Naive thymus-derived CD4-positive, alpha-beta T cell (primary cell): ENCODE measurements at regions of chr20 and their contacts with region 1.

Region 1: DNA sequence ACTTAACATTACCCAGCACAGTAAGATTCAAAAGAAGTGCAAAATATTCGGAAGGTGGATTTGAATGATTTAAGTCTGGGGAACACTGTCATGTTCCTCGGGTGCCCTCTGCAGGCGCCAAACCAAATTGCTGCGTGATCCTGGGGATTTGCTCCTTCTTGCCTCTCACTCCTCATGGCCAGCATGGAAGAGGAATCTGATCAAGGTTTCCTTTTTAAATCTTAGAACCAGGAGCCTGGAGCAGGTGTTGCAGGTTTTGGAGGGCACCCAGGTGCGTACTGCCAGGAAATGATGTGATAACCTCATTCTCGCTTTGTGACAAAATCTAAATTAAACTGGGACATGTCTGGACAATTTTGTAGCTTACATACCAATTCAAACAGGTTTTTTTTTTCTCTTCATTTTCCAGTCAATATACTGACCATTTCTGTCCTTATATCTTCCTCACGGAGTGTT is 8.1 kb upstream of the PFDN4 start:
- DNase-seq: peak; percentile 32 to 69 (median 53)
- ATAC-seq: peak; percentile 78
- H3K4me3 ChIP-seq: no peak overlapping the region
- H3K4me3 Mint-ChIP-seq: no peak overlapping the region
- H3K27ac ChIP-seq: no peak overlapping the region
- H3K27ac Mint-ChIP-seq: no peak overlapping the region
- H3K4me1 ChIP-seq: no peaks in the 10 kb centered on the region
- H3K4me1 Mint-ChIP-seq: peaks cover 0 to 4% (median 0%) of the 10 kb centered on the region in 7 donors
- H3K27me3 ChIP-seq: no peaks in the 10 kb centered on the region
- H3K27me3 Mint-ChIP-seq: peaks cover 0 to 4% (median 0%) of the 10 kb centered on the region in 5 donors

Region 2: DNA sequence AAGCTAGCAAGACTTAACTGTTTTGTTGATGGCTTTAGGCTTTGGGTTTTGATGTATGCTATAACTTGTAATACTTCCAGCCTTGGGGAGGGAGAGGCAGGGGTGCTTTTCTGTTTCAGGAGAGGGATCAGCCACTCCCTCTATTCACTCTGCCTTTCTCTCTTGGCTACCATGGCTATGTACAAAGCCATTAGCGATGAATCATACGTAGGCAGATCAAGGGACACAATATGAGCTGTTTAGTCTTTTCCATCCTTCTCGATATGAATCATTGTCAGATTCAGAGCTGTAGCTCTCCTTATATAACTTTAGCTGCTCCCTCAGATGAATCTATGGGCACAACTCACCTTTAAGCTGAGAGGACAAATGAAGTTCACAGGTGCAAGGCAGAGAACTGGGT is 997.0 kb before region 1 on chr20:
- CTCF ChIA-PET with region 1: no interaction called
- POLR2A ChIA-PET with region 1: no interaction called
- intact Hi-C with region 1: no loop called
- DNase-seq: no peak
- ATAC-seq: no peak
- H3K4me3 ChIP-seq: no peak overlapping the region
- H3K4me3 Mint-ChIP-seq: no peak overlapping the region
- H3K27ac ChIP-seq: no peak overlapping the region
- H3K27ac Mint-ChIP-seq: peak overlapping the region in 2 of 9 donors; percentile 4 to 31
- H3K4me1 ChIP-seq: peaks cover 0 to 4% of the 10 kb centered on the region in 2 donors
- H3K4me1 Mint-ChIP-seq: peaks cover 2 to 24% (median 14%) of the 10 kb centered on the region in 7 donors
- H3K27me3 ChIP-seq: no peaks in the 10 kb centered on the region
- H3K27me3 Mint-ChIP-seq: no peaks in the 10 kb centered on the region

Region 3: DNA sequence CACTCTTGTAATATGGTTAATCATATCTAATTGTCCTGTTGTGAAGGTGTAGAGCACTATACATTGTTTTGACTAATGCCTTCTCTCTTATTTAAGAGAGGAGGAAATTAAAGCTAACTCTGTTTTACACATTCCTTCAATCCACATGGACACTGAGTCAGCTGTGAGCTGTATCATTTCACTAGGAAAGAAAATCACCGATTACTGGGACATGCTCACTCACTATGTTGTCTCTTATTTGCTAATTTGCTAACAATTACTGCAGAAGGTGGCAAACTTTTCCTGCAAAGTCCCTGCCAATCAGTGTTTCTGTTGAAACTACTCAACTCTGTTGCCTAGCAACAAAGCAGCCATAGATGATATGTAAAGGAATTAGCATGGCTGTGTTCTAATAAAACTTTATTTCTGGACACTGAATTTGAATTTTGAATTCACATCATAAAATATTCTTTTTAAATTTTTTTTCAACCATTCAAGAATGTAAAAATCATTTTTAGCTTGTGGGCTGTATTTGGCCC is 227.5 kb before region 1 on chr20:
- CTCF ChIA-PET with region 1: no interaction called
- POLR2A ChIA-PET with region 1: no interaction called
- intact Hi-C with region 1: no loop called
- DNase-seq: no peak
- ATAC-seq: no peak
- H3K4me3 ChIP-seq: no peak overlapping the region
- H3K4me3 Mint-ChIP-seq: no peak overlapping the region
- H3K27ac ChIP-seq: no peak overlapping the region
- H3K27ac Mint-ChIP-seq: no peak overlapping the region
- H3K4me1 ChIP-seq: no peaks in the 10 kb centered on the region
- H3K4me1 Mint-ChIP-seq: no peaks in the 10 kb centered on the region
- H3K27me3 ChIP-seq: no peaks in the 10 kb centered on the region
- H3K27me3 Mint-ChIP-seq: peaks cover 0 to 10% (median 0%) of the 10 kb centered on the region in 5 donors

Region 4: DNA sequence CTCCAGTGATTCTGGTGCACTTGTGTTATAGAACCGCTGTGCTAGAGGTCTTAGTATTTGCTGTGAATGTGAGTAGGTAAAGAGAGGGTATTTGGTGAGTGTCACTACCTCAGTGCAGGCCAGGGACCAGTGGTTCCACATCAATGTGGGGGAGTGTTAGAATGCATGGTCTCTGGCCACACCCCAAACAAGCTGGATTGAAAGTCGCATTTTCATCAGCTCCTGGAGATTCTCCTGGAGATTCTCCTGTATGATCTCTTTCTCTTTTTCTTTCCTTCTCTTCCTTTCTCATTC is 102.6 kb before region 1 on chr20:
- CTCF ChIA-PET with region 1: interaction called, 6 read pairs
- POLR2A ChIA-PET with region 1: no interaction called
- intact Hi-C with region 1: loop called (anchors 1 kb)
- DNase-seq: no peak
- ATAC-seq: no peak
- H3K4me3 ChIP-seq: no peak overlapping the region
- H3K4me3 Mint-ChIP-seq: no peak overlapping the region
- H3K27ac ChIP-seq: no peak overlapping the region
- H3K27ac Mint-ChIP-seq: no peak overlapping the region
- H3K4me1 ChIP-seq: no peaks in the 10 kb centered on the region
- H3K4me1 Mint-ChIP-seq: peaks cover 0 to 5% (median 2%) of the 10 kb centered on the region in 7 donors
- H3K27me3 ChIP-seq: no peaks in the 10 kb centered on the region
- H3K27me3 Mint-ChIP-seq: peaks cover 0 to 15% (median 5%) of the 10 kb centered on the region in 5 donors